ENCODE measurements at regions of chr7 and their contacts with region 1.

Region 1: GRCh38 chr7:106022193-106022821 is 59.2 kb downstream of the CDHR3 start:
- DNase-seq: peak; percentile 62 to 96 (median 84)
- ATAC-seq: peak; percentile 85
- H3K4me3 ChIP-seq: peak overlapping the region; percentile 11 to 20
- H3K4me3 Mint-ChIP-seq: peak overlapping the region; percentile 59
- H3K27ac ChIP-seq: peak overlapping the region; percentile 80 to 82
- H3K27ac Mint-ChIP-seq: peak overlapping the region; percentile 95
- H3K4me1 ChIP-seq: peaks cover 48% of the 10 kb centered on the region
- H3K4me1 Mint-ChIP-seq: peaks cover 68% of the 10 kb centered on the region
- H3K27me3 ChIP-seq: peaks cover 0 to 3% of the 10 kb centered on the region in 2 experiments
- H3K27me3 Mint-ChIP-seq: no peaks in the 10 kb centered on the region
- CTCF ChIP-seq: no peak

Region 2: DNA sequence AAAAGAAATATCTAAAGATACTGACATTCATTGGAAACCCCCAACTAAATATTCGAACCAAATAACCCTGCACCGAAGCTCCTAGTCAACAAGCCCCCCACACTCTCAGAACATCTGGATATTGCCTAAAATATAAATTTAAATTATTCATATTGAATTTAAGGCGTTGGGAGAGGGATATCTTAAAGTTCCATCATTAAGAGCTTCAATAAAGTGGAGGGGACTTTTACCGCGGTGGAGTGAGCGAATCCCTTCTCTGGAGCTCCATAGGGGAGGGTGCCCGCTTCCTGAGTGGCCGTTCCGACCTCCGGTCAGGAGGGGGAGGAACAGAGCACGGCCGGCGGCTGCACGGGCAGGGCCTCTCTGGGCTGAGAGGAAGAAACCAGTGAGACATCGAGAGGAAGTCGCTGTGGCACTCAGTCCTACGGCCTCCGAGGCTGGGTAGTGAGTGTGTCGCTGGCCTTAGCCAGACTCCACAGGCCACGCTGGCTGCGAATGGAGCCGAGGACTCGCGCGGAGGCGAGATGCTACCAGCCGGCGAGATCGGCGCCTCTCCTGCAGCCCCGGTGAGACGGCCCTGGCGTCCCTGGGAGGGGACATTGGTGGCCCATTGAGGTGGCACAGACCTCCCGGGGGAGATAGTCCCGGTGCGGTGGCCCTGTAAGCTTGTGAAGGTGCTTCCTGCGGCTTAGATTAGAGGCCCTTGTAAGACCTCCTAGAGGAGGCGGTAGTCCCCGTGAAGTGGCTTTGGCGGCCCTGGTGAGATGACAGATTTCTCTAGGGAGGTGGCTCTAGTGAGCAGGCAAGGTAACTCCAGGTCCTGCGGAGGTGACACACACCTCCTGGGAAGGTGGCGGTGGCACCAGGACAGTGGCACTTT is 490.3 kb before region 1 on chr7 and contains the start of gene RINT1:
- CTCF ChIA-PET with region 1: no interaction called
- POLR2A ChIA-PET with region 1: interaction called, 3 read pairs
- intact Hi-C with region 1: loop called in 1 of 2 experiments (anchors 10 kb)
- DNase-seq: peak; percentile 84 to 94 (median 87)
- ATAC-seq: peak; percentile 91
- H3K4me3 ChIP-seq: peak within 1 kb of the TSS; percentile 90 to 93
- H3K4me3 Mint-ChIP-seq: peak within 1 kb of the TSS; percentile 94
- H3K27ac ChIP-seq: peak within 1 kb of the TSS; percentile 75 to 85
- H3K27ac Mint-ChIP-seq: peak within 1 kb of the TSS; percentile 96
- H3K4me1 ChIP-seq: peaks cover 15% of the 10 kb centered on the region
- H3K4me1 Mint-ChIP-seq: peaks cover 43% of the 10 kb centered on the region
- H3K27me3 ChIP-seq: no peaks in the 10 kb centered on the region
- H3K27me3 Mint-ChIP-seq: no peaks in the 10 kb centered on the region
- CTCF ChIP-seq: peak; percentile 57
- total RNA-seq, gene RINT1: 46.3 to 50.8 TPM

Region 3: DNA sequence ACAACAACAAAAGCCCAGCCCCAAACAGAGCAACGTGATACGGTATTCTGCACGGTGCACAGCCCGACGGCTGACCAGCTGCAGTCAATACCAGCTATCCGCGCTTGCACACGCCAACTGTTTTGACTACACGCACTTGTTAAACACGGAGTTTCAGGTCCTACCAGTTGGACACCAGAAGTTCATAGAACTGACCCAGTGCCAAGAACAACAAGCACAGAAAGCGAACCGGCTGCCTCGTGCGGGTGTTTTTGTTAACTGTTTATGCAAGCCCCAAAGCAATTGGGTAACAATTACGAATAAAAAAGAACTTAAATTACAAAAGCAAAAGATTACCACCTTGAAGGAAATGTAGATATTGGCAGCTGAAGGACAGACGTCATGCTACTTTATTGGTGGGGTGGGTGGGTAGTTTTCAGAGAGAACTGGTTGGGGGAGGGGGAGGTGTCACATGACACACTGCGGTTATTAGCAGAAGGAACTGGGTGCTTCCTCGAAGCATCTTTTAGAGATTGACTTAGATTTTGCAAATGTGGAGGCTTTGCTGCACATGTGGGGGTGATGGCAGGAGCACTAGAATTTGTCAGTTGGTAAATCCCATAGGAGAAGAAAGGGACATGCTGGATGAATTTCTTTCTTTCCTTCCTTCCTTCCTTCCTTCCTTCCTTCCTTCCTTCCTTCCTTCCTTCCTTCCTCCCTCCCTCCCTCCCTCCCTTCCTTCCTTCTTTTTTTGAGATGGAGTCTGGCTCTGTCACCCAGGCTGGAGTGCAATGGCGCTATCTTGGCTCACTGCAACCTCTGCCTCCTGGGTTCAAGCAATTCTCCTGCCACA is 330.4 kb before region 1 on chr7:
- CTCF ChIA-PET with region 1: no interaction called
- POLR2A ChIA-PET with region 1: interaction called, 6 read pairs
- intact Hi-C with region 1: loop called in 1 of 2 experiments (anchors 5 kb)
- DNase-seq: peak; percentile 45 to 91 (median 71)
- ATAC-seq: peak; percentile 75
- H3K4me3 ChIP-seq: peak overlapping the region; percentile 69 to 72
- H3K4me3 Mint-ChIP-seq: peak overlapping the region; percentile 93
- H3K27ac ChIP-seq: peak overlapping the region; percentile 85 to 96
- H3K27ac Mint-ChIP-seq: peak overlapping the region; percentile 98
- H3K4me1 ChIP-seq: peaks cover 34% of the 10 kb centered on the region
- H3K4me1 Mint-ChIP-seq: peaks cover 64% of the 10 kb centered on the region
- H3K27me3 ChIP-seq: no peaks in the 10 kb centered on the region
- H3K27me3 Mint-ChIP-seq: no peaks in the 10 kb centered on the region
- CTCF ChIP-seq: no peak

Region 4: DNA sequence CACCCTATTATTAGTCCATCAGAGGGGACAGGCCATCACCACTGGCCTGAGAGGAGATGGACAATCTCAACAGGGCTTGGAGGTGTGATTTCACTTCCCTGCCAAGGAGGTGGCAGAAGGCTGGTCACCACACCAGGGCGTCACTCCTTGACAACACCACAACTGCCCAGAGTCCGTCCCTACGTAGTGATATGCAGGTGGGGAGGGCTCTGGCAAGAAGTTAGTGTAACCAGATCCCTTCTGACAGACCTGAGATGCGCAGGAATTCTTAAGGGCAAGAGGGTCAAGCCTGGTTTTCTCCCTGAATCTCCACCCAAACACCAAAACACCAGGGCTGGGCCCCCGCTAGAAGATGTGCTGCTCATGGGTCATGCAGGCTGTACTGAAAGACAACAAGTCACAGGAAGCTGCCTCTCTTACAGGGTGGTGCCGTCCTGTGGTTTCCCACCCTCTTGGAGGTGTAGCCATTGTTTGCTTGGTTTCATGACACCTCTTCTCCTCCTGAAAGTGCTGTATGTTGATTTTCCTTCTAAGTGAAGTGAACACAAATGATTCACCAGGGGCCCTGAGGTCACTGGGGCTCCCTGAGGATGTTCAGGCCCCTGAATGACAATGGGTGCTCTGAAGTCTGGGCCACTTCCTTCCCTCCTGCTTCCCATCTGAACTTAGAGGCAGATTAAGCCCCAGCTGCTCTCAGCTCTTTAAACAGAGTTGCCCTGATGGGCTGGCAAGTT is 173.0 kb before region 1 on chr7:
- CTCF ChIA-PET with region 1: no interaction called
- POLR2A ChIA-PET with region 1: interaction called, 7 read pairs
- intact Hi-C with region 1: loop called in 1 of 2 experiments (anchors 1 kb)
- DNase-seq: peak; percentile 30 to 91 (median 71)
- ATAC-seq: peak; percentile 86
- H3K4me3 ChIP-seq: peak overlapping the region in 1 of 2 experiments; percentile 18
- H3K4me3 Mint-ChIP-seq: peak overlapping the region; percentile 52
- H3K27ac ChIP-seq: peak overlapping the region; percentile 44 to 72
- H3K27ac Mint-ChIP-seq: peak overlapping the region; percentile 90
- H3K4me1 ChIP-seq: peaks cover 52% of the 10 kb centered on the region
- H3K4me1 Mint-ChIP-seq: peaks cover 74% of the 10 kb centered on the region
- H3K27me3 ChIP-seq: no peaks in the 10 kb centered on the region
- H3K27me3 Mint-ChIP-seq: no peaks in the 10 kb centered on the region
- CTCF ChIP-seq: no peak

Region 5: DNA sequence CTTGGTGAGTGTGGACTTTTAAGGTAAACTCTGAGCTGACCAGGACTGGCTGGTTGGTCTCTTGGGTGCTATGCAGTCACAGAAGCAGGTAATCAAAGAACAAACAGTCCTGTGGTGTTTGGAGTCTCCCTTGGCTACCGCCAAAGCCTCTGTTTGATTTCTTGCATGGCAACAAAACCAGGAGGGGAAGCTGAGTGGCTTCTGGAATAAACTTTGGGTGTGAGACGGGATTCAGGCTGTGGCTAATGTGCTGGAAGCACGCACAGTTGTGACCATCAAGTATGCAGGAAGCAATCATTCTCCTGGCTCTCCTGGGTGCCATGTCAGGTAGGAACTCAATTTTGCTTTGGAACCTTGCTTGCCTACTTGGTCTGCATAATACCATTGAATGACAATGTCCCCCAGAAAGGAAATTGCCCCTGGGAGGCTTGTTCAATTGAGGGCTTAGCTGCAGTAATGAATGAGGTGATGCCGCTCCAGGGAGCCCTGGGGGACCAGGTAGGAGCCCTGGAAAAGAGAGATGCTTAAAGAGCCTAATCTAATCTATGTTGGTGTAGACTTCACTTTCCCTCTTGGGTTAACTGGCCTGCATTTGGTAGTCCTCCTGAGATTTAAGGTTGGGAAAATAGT is 59.2 kb before region 1 on chr7 and contains the start of gene CDHR3:
- CTCF ChIA-PET with region 1: no interaction called
- POLR2A ChIA-PET with region 1: no interaction called
- intact Hi-C with region 1: no loop called
- DNase-seq: no peak
- ATAC-seq: no peak
- H3K4me3 ChIP-seq: no peak within 1 kb of the TSS
- H3K4me3 Mint-ChIP-seq: no peak within 1 kb of the TSS
- H3K27ac ChIP-seq: no peak within 1 kb of the TSS
- H3K27ac Mint-ChIP-seq: no peak within 1 kb of the TSS
- H3K4me1 ChIP-seq: no peaks in the 10 kb centered on the region
- H3K4me1 Mint-ChIP-seq: no peaks in the 10 kb centered on the region
- H3K27me3 ChIP-seq: no peaks in the 10 kb centered on the region
- H3K27me3 Mint-ChIP-seq: no peaks in the 10 kb centered on the region
- CTCF ChIP-seq: no peak
- total RNA-seq, gene CDHR3: 4.3 to 4.4 TPM

Region 6: GRCh38 chr7:106009403-106010226 is 12.7 kb before region 1 on chr7:
- CTCF ChIA-PET with region 1: interaction called, 42 read pairs
- POLR2A ChIA-PET with region 1: interaction called, 5 read pairs
- intact Hi-C with region 1: loop called (anchors 1 kb)
- DNase-seq: peak; percentile 61 to 89 (median 87)
- ATAC-seq: peak; percentile 98
- H3K4me3 ChIP-seq: no peak overlapping the region
- H3K4me3 Mint-ChIP-seq: peak overlapping the region; percentile 16
- H3K27ac ChIP-seq: no peak overlapping the region
- H3K27ac Mint-ChIP-seq: peak overlapping the region; percentile 18
- H3K4me1 ChIP-seq: peaks cover 32% of the 10 kb centered on the region
- H3K4me1 Mint-ChIP-seq: peaks cover 36% of the 10 kb centered on the region
- H3K27me3 ChIP-seq: no peaks in the 10 kb centered on the region
- H3K27me3 Mint-ChIP-seq: no peaks in the 10 kb centered on the region
- CTCF ChIP-seq: peak; percentile 91

Measured in CD8-positive, alpha-beta T cell (primary cell).